ENCODE measurements at regions of chr2 and their contacts with region 1.

Region 1: GRCh38 chr2:219177552-219178376 is at the start of gene RETREG2:
- DNase-seq: peak; percentile 79 to 86 (median 83)
- ATAC-seq: peak; percentile 73
- H3K4me3 ChIP-seq: peak within 1 kb of the TSS; percentile 97
- H3K4me3 Mint-ChIP-seq: peak within 1 kb of the TSS; percentile 90 to 99 (median 96)
- H3K27ac ChIP-seq: peak within 1 kb of the TSS; percentile 96
- H3K27ac Mint-ChIP-seq: peak within 1 kb of the TSS; percentile 97 to 100 (median 99)
- H3K4me1 ChIP-seq: peaks cover 44 to 47% of the 10 kb centered on the region in 2 donors
- H3K4me1 Mint-ChIP-seq: peaks cover 48 to 80% (median 69%) of the 10 kb centered on the region in 7 donors
- H3K27me3 ChIP-seq: no peaks in the 10 kb centered on the region
- H3K27me3 Mint-ChIP-seq: no peaks in the 10 kb centered on the region
- total RNA-seq, gene RETREG2: 70.2 to 124 (median 90.9) TPM

Region 2: DNA sequence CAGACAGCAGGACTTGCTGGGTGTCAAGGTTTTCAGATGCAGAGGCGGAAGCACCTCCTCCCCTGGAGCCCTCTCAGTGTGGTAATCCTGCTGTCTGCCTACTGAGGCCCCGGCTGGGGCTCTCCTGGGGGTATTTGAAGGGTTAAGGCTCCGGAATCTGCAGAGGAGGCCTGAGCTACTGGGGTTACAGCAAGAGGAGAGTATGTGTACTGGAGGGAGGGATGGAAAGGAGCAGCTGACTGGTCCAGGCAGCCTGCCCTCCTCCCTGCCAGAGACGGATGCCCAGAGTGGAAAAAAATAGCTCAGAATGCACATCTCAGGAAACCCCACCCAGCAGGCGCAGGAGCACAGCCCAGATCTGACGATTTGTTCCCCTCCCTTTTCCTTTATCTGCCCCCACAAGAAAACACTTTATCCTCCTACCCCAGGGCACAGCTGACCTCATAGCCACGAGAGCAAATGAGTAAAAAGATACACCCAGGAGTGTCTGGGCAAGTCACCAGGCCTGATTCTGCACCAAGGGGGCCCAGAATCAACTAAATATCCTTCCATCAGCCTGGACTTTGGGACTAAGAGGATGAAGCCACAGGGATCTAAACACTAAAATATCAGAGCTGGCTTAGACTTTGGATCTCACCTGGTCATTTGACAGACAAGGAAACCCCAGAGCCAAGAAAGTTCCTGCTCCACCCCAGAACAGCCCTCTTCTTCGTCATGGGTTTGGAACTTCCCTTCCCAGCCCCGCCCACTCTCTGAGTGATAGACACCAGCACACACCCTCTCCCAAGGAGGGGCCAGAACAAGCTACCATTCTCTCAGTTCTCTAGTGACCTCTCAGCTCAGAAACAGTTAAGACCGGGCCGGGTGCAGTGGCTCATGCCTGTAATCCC is 890.9 kb before region 1 on chr2:
- CTCF ChIA-PET with region 1: no interaction called
- POLR2A ChIA-PET with region 1: no interaction called
- intact Hi-C with region 1: loop called in 1 of 2 experiments (anchors 1 kb)
- DNase-seq: peak; percentile 53 to 90 (median 78)
- ATAC-seq: peak; percentile 87
- H3K4me3 ChIP-seq: peak overlapping the region; percentile 66
- H3K4me3 Mint-ChIP-seq: peak overlapping the region; percentile 85 to 97 (median 94)
- H3K27ac ChIP-seq: peak overlapping the region; percentile 93
- H3K27ac Mint-ChIP-seq: peak overlapping the region; percentile 95 to 99 (median 99)
- H3K4me1 ChIP-seq: peaks cover 74 to 77% of the 10 kb centered on the region in 2 donors
- H3K4me1 Mint-ChIP-seq: peaks cover 53 to 87% (median 76%) of the 10 kb centered on the region in 7 donors
- H3K27me3 ChIP-seq: no peaks in the 10 kb centered on the region
- H3K27me3 Mint-ChIP-seq: no peaks in the 10 kb centered on the region

Region 3: GRCh38 chr2:218754201-218754600 is 423.6 kb before region 1 on chr2:
- CTCF ChIA-PET with region 1: no interaction called
- POLR2A ChIA-PET with region 1: no interaction called
- intact Hi-C with region 1: no loop called
- DNase-seq: no peak
- ATAC-seq: no peak
- H3K4me3 ChIP-seq: no peak overlapping the region
- H3K4me3 Mint-ChIP-seq: no peak overlapping the region
- H3K27ac ChIP-seq: no peak overlapping the region
- H3K27ac Mint-ChIP-seq: no peak overlapping the region
- H3K4me1 ChIP-seq: no peaks in the 10 kb centered on the region
- H3K4me1 Mint-ChIP-seq: peaks cover 0 to 1% (median 0%) of the 10 kb centered on the region in 7 donors
- H3K27me3 ChIP-seq: no peaks in the 10 kb centered on the region
- H3K27me3 Mint-ChIP-seq: no peaks in the 10 kb centered on the region

Region 4: GRCh38 chr2:218788529-218789255 is 389.1 kb before region 1 on chr2:
- CTCF ChIA-PET with region 1: no interaction called
- POLR2A ChIA-PET with region 1: no interaction called
- intact Hi-C with region 1: no loop called
- DNase-seq: no peak
- ATAC-seq: no peak
- H3K4me3 ChIP-seq: no peak overlapping the region
- H3K4me3 Mint-ChIP-seq: no peak overlapping the region
- H3K27ac ChIP-seq: no peak overlapping the region
- H3K27ac Mint-ChIP-seq: no peak overlapping the region
- H3K4me1 ChIP-seq: no peaks in the 10 kb centered on the region
- H3K4me1 Mint-ChIP-seq: no peaks in the 10 kb centered on the region
- H3K27me3 ChIP-seq: no peaks in the 10 kb centered on the region
- H3K27me3 Mint-ChIP-seq: peaks cover 22 to 51% (median 42%) of the 10 kb centered on the region in 5 donors

Region 5: GRCh38 chr2:218870984-218871344 is 306.8 kb before region 1 on chr2:
- CTCF ChIA-PET with region 1: no interaction called
- POLR2A ChIA-PET with region 1: no interaction called
- intact Hi-C with region 1: no loop called
- DNase-seq: no peak
- ATAC-seq: no peak
- H3K4me3 ChIP-seq: peak overlapping the region; percentile 44
- H3K4me3 Mint-ChIP-seq: peak overlapping the region in 9 of 10 donors; percentile 41 to 95 (median 72)
- H3K27ac ChIP-seq: no peak overlapping the region
- H3K27ac Mint-ChIP-seq: peak overlapping the region in 2 of 9 donors; percentile 7 to 66
- H3K4me1 ChIP-seq: peaks cover 5 to 20% of the 10 kb centered on the region in 2 donors
- H3K4me1 Mint-ChIP-seq: peaks cover 11 to 31% (median 24%) of the 10 kb centered on the region in 7 donors
- H3K27me3 ChIP-seq: peaks cover 8 to 15% of the 10 kb centered on the region in 2 donors
- H3K27me3 Mint-ChIP-seq: peaks cover 22 to 85% (median 35%) of the 10 kb centered on the region in 5 donors

Region 6: GRCh38 chr2:218892693-218893348 is 284.9 kb before region 1 on chr2:
- CTCF ChIA-PET with region 1: no interaction called
- POLR2A ChIA-PET with region 1: interaction called, 4 read pairs
- intact Hi-C with region 1: loop called in 1 of 2 experiments (anchors 1 kb)
- DNase-seq: peak; percentile 82 to 93 (median 91)
- ATAC-seq: peak; percentile 78
- H3K4me3 ChIP-seq: peak overlapping the region; percentile 48
- H3K4me3 Mint-ChIP-seq: peak overlapping the region; percentile 58 to 85 (median 75)
- H3K27ac ChIP-seq: peak overlapping the region; percentile 89
- H3K27ac Mint-ChIP-seq: peak overlapping the region; percentile 59 to 96 (median 89)
- H3K4me1 ChIP-seq: peaks cover 53 to 54% of the 10 kb centered on the region in 2 donors
- H3K4me1 Mint-ChIP-seq: peaks cover 38 to 56% (median 52%) of the 10 kb centered on the region in 7 donors
- H3K27me3 ChIP-seq: no peaks in the 10 kb centered on the region
- H3K27me3 Mint-ChIP-seq: peaks cover 0 to 76% (median 0%) of the 10 kb centered on the region in 5 donors

Region 7: GRCh38 chr2:219206442-219207253 is 28.9 kb after region 1 on chr2 and contains the start of gene ZFAND2B:
- CTCF ChIA-PET with region 1: interaction called, 54 read pairs
- POLR2A ChIA-PET with region 1: interaction called, 343 read pairs
- intact Hi-C with region 1: loop called (anchors 1 kb)
- DNase-seq: peak; percentile 92 to 98 (median 96)
- ATAC-seq: peak; percentile 96
- H3K4me3 ChIP-seq: peak within 1 kb of the TSS; percentile 98
- H3K4me3 Mint-ChIP-seq: peak within 1 kb of the TSS; percentile 77 to 98 (median 94)
- H3K27ac ChIP-seq: peak within 1 kb of the TSS; percentile 92
- H3K27ac Mint-ChIP-seq: peak within 1 kb of the TSS; percentile 96 to 99 (median 97)
- H3K4me1 ChIP-seq: peaks cover 20 to 28% of the 10 kb centered on the region in 2 donors
- H3K4me1 Mint-ChIP-seq: peaks cover 15 to 48% (median 43%) of the 10 kb centered on the region in 7 donors
- H3K27me3 ChIP-seq: no peaks in the 10 kb centered on the region
- H3K27me3 Mint-ChIP-seq: no peaks in the 10 kb centered on the region
- total RNA-seq, gene ZFAND2B: 50.1 to 79.5 (median 71.3) TPM

Region 8: GRCh38 chr2:219245148-219245898 is 67.6 kb after region 1 on chr2 and contains the starts of genes GLB1L and STK16:
- CTCF ChIA-PET with region 1: interaction called, 5 read pairs
- POLR2A ChIA-PET with region 1: interaction called, 162 read pairs
- intact Hi-C with region 1: loop called (anchors 1 kb)
- DNase-seq: peak; percentile 76 to 95 (median 85)
- ATAC-seq: peak; percentile 80
- H3K4me3 ChIP-seq: peak within 1 kb of the TSS; percentile 92
- H3K4me3 Mint-ChIP-seq: peak within 1 kb of the TSS; percentile 82 to 100 (median 93)
- H3K27ac ChIP-seq: peak within 1 kb of the TSS; percentile 89
- H3K27ac Mint-ChIP-seq: peak within 1 kb of the TSS; percentile 88 to 99 (median 97)
- H3K4me1 ChIP-seq: peaks cover 52 to 53% of the 10 kb centered on the region in 2 donors
- H3K4me1 Mint-ChIP-seq: peaks cover 26 to 73% (median 59%) of the 10 kb centered on the region in 7 donors
- H3K27me3 ChIP-seq: no peaks in the 10 kb centered on the region
- H3K27me3 Mint-ChIP-seq: peaks cover 0 to 2% (median 0%) of the 10 kb centered on the region in 5 donors
- total RNA-seq, gene GLB1L: 1.9 to 4.5 (median 2.7) TPM
- total RNA-seq, gene STK16: 17.4 to 35.0 (median 21.8) TPM

Region 9: GRCh38 chr2:219378163-219378851 is 200.5 kb after region 1 on chr2:
- CTCF ChIA-PET with region 1: no interaction called
- POLR2A ChIA-PET with region 1: no interaction called
- intact Hi-C with region 1: no loop called
- DNase-seq: no peak
- ATAC-seq: no peak
- H3K4me3 ChIP-seq: no peak overlapping the region
- H3K4me3 Mint-ChIP-seq: no peak overlapping the region
- H3K27ac ChIP-seq: no peak overlapping the region
- H3K27ac Mint-ChIP-seq: no peak overlapping the region
- H3K4me1 ChIP-seq: no peaks in the 10 kb centered on the region
- H3K4me1 Mint-ChIP-seq: peaks cover 0 to 2% (median 0%) of the 10 kb centered on the region in 7 donors
- H3K27me3 ChIP-seq: no peaks in the 10 kb centered on the region
- H3K27me3 Mint-ChIP-seq: no peaks in the 10 kb centered on the region

Region 10: DNA sequence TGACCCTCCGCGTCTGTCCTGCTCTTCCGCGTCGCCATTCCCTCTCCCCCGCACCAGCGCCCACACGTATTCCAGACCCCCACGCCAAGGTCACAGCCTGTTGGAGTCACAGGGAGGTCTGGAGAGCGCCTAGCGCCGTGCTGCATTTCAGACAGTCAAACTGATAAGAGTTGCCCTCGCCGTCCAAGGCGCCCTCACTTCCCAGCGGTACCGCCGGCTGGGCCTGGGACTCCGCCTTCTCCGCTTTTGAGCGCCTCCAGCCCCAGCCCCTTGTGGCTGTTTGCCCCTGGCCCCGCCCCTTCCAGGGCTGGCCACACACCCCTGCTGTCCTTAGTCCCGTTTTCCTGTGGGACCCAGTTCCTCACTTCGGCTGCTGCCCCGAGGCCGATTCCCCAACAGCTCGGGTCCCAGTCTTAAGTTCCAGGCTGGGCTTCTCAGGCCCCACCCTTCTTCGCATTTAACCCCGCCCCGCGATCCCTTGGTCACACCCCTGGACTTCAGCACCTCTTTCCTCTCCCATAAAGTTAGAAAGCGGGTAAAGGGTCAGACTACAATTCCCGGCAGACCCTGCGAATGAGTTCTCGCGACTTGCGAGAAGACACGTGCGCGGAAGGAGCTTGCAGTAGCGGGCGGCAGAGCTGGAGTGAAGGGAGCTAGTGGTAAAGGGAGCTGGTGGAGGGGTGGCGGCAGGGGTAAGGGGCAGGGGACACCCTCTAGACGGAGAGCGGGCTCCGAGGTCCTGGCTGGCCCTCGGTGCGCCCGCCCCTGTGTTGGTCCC is 320.7 kb after region 1 on chr2 and contains the start of gene GMPPA:
- CTCF ChIA-PET with region 1: no interaction called
- POLR2A ChIA-PET with region 1: no interaction called
- intact Hi-C with region 1: loop called (anchors 5 kb)
- DNase-seq: peak; percentile 78 to 95 (median 90)
- ATAC-seq: peak; percentile 94
- H3K4me3 ChIP-seq: peak within 1 kb of the TSS; percentile 85
- H3K4me3 Mint-ChIP-seq: peak within 1 kb of the TSS; percentile 91 to 99 (median 96)
- H3K27ac ChIP-seq: peak within 1 kb of the TSS; percentile 79
- H3K27ac Mint-ChIP-seq: peak within 1 kb of the TSS; percentile 76 to 97 (median 86)
- H3K4me1 ChIP-seq: peaks cover 19 to 22% of the 10 kb centered on the region in 2 donors
- H3K4me1 Mint-ChIP-seq: peaks cover 26 to 42% (median 36%) of the 10 kb centered on the region in 7 donors
- H3K27me3 ChIP-seq: peaks cover 4 to 9% of the 10 kb centered on the region in 2 donors
- H3K27me3 Mint-ChIP-seq: peaks cover 28 to 47% (median 40%) of the 10 kb centered on the region in 5 donors
- total RNA-seq, gene GMPPA: 22.4 to 58.3 (median 37.2) TPM

Measured in naive thymus-derived CD4-positive, alpha-beta T cell (primary cell).